ENCODE measurements at regions of chr2 and their contacts with region 1.

Region 1: GRCh38 chr2:65264821-65265670 is 37.4 kb downstream of the ACTR2 start:
- DNase-seq: peak in 4 of 5 donors; percentile 8 to 36 (median 26)
- H3K4me3 ChIP-seq: no peak overlapping the region
- H3K4me3 Mint-ChIP-seq: no peak overlapping the region
- H3K27ac ChIP-seq: no peak overlapping the region
- H3K27ac Mint-ChIP-seq: peak overlapping the region in 3 of 7 donors; percentile 2 to 52 (median 9)
- H3K4me1 ChIP-seq: peaks cover 4% of the 10 kb centered on the region
- H3K4me1 Mint-ChIP-seq: peaks cover 0 to 14% (median 11%) of the 10 kb centered on the region in 4 donors
- H3K27me3 ChIP-seq: no peaks in the 10 kb centered on the region
- H3K27me3 Mint-ChIP-seq: no peaks in the 10 kb centered on the region

Region 2: GRCh38 chr2:65300761-65301711 is 36.0 kb after region 1 on chr2:
- CTCF ChIA-PET with region 1: no interaction called
- POLR2A ChIA-PET with region 1: no interaction called
- intact Hi-C with region 1: loop called (anchors 1 kb)
- DNase-seq: peak; percentile 66 to 79 (median 72)
- H3K4me3 ChIP-seq: peak overlapping the region; percentile 26 to 27
- H3K4me3 Mint-ChIP-seq: peak overlapping the region; percentile 74 to 91 (median 82)
- H3K27ac ChIP-seq: no peak overlapping the region
- H3K27ac Mint-ChIP-seq: peak overlapping the region; percentile 73 to 94 (median 93)
- H3K4me1 ChIP-seq: peaks cover 36% of the 10 kb centered on the region
- H3K4me1 Mint-ChIP-seq: peaks cover 20 to 50% (median 34%) of the 10 kb centered on the region in 4 donors
- H3K27me3 ChIP-seq: no peaks in the 10 kb centered on the region
- H3K27me3 Mint-ChIP-seq: peaks cover 0 to 2% of the 10 kb centered on the region in 2 donors

Region 3: DNA sequence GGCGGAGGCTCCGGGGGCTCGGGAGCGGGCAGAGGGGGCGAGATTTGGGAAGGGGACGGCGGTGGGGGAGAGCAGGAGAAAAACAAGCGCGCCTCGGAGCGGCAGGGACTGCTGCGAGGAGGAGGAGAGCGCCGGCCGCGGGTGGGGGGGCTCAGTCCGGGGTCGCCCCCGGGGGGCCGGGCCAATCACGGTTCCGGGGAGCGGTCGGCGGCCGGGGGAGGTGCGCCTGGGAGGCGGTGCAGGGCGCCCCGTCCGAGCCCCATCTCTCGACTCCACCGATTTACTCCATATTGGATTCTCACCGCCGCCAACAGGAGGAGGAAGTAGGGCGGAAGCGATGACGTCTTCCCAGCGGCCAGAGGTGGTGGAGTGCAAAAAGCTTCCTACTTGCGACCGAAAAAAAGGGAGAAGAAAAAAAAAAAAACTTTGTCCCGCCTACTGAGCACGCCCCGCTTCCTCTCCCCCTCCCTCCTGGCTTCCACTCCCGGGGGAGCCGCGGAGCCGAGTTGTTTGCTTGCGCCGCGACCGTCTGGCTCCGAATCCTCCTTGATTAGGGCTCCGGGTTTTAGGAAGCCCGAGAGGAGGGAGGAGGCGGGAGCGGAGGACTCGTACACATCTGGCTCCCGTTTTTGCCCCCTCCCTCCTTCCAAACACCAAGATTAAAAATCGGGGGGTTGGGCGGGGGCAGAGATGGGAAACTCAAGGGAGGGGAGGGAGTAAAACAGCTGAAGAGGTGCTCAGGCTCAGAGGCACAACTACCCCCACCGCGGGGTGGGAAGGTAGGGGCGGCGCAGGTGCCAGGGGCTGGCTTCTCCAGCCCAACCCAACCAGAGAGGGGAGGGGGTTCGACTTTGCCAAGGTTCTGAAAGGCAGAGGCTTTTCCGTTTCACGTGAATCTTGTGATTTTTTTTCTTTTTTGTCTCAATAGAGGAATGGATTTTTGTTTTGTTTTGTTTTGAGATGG is 167.5 kb after region 1 on chr2 and contains the start of gene SPRED2:
- CTCF ChIA-PET with region 1: no interaction called
- POLR2A ChIA-PET with region 1: no interaction called
- intact Hi-C with region 1: loop called (anchors 10 kb)
- DNase-seq: peak; percentile 64 to 86 (median 67)
- H3K4me3 ChIP-seq: peak within 1 kb of the TSS; percentile 39 to 62
- H3K4me3 Mint-ChIP-seq: peak within 1 kb of the TSS; percentile 90 to 97 (median 91)
- H3K27ac ChIP-seq: peak within 1 kb of the TSS; percentile 34
- H3K27ac Mint-ChIP-seq: peak within 1 kb of the TSS; percentile 78 to 93 (median 87)
- H3K4me1 ChIP-seq: peaks cover 30% of the 10 kb centered on the region
- H3K4me1 Mint-ChIP-seq: peaks cover 10 to 40% (median 14%) of the 10 kb centered on the region in 4 donors
- H3K27me3 ChIP-seq: peaks cover 10% of the 10 kb centered on the region
- H3K27me3 Mint-ChIP-seq: peaks cover 11 to 29% of the 10 kb centered on the region in 2 donors
- total RNA-seq, gene SPRED2: 0.52 to 0.72 TPM

Region 4: DNA sequence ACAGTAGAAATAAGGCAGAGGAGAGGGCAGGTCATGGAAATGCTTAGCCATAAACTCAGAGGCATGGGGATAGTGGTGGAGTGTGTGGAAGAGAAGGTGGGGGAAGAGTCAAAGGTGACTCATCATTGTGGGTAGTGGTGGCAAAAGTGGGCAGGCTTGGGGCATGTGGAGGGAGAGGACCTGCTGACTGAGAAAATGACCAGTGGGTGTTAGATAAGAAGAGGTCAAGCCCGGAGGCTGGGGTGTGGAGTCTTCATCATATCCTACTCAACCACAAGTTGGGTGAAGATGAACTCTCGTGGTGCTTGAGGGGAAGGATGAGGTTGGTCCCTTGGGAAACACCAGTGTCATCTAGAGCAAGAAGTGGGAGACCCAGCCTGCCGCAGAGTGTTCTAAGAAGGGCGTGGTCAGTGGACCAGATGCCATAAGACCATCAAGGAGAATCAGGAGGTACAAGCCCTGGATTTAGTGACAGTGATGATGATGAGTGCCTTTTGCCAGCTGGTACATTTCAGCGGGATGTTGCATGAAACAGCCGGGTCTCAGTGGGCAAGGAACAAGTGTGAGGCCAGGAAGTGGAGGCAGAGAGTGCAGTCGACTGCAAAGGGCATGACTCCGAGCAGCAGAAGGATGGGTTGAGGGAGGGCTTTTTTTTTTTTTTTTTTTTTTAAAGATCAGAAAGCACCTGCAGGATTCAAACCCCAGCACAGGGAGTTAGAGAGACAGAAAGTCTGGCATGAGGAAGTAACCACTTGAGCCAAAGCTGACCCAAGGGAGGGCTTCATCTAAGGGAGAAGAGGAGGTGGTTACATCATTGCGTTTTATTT is 289.9 kb after region 1 on chr2:
- CTCF ChIA-PET with region 1: interaction called, 3 read pairs
- POLR2A ChIA-PET with region 1: no interaction called
- intact Hi-C with region 1: loop called (anchors 1 kb)
- DNase-seq: no peak
- H3K4me3 ChIP-seq: no peak overlapping the region
- H3K4me3 Mint-ChIP-seq: no peak overlapping the region
- H3K27ac ChIP-seq: no peak overlapping the region
- H3K27ac Mint-ChIP-seq: peak overlapping the region in 1 of 7 donors; percentile 57
- H3K4me1 ChIP-seq: no peaks in the 10 kb centered on the region
- H3K4me1 Mint-ChIP-seq: peaks cover 4 to 5% (median 4%) of the 10 kb centered on the region in 4 donors
- H3K27me3 ChIP-seq: no peaks in the 10 kb centered on the region
- H3K27me3 Mint-ChIP-seq: peaks cover 6% of the 10 kb centered on the region in 2 donors

Region 5: DNA sequence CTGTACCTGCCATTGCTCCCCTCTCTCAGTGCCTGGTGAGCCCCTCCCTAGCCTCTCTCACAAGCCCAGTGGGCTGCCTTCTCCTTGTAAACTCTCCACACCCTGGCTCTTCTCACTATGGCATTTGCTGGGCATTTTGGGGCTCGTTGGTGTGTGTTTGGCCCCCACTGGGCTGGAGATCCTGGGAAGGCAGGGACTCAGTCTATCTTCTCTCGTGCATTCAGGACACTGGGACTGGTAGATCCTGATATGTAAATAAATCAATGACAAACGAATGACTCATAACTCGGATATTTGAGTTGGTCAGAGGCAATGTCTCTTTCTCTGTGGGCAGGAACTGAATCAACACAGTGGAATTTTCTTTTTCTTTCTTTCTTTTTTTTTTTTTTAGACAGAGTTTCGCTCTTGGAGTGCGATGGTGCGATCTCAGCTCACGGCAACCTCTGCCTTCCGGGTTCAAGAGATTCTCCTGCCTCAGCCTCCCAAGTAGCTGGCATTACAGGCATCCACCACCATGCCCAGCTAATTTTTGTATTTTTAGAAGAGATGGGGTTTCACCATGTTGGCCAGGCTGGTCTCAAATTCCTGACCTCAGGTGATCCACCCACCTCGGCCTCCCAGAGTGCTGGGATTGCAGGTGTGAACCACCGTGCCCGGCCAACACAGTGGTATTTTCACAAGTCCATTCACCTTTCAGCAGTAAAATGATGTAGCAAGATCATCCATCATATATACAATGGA is 312.0 kb after region 1 on chr2:
- CTCF ChIA-PET with region 1: interaction called, 10 read pairs
- POLR2A ChIA-PET with region 1: no interaction called
- intact Hi-C with region 1: loop called (anchors 1 kb)
- DNase-seq: no peak
- H3K4me3 ChIP-seq: no peak overlapping the region
- H3K4me3 Mint-ChIP-seq: no peak overlapping the region
- H3K27ac ChIP-seq: no peak overlapping the region
- H3K27ac Mint-ChIP-seq: no peak overlapping the region
- H3K4me1 ChIP-seq: no peaks in the 10 kb centered on the region
- H3K4me1 Mint-ChIP-seq: peaks cover 0 to 4% (median under 1%) of the 10 kb centered on the region in 4 donors
- H3K27me3 ChIP-seq: no peaks in the 10 kb centered on the region
- H3K27me3 Mint-ChIP-seq: peaks cover 9 to 13% of the 10 kb centered on the region in 2 donors

Measured in CD4-positive, alpha-beta memory T cell (primary cell).